ENCODE measurements at regions of chr12 and their contacts with region 1.

Region 1: GRCh38 chr12:49288412-49288853 is 6.5 kb upstream of the PRPH start:
- DNase-seq: peak in 1 of 2 donors; percentile 88
- H3K4me3 ChIP-seq: no peak overlapping the region
- CTCF ChIP-seq: peak in 1 of 3 donors; percentile 64
- POLR2A ChIP-seq: no peak

Region 2: GRCh38 chr12:49160399-49160798 is 128.0 kb before region 1 on chr12:
- intact Hi-C with region 1: no loop called
- DNase-seq: no peak
- H3K4me3 ChIP-seq: no peak overlapping the region
- CTCF ChIP-seq: no peak
- POLR2A ChIP-seq: no peak

Region 3: DNA sequence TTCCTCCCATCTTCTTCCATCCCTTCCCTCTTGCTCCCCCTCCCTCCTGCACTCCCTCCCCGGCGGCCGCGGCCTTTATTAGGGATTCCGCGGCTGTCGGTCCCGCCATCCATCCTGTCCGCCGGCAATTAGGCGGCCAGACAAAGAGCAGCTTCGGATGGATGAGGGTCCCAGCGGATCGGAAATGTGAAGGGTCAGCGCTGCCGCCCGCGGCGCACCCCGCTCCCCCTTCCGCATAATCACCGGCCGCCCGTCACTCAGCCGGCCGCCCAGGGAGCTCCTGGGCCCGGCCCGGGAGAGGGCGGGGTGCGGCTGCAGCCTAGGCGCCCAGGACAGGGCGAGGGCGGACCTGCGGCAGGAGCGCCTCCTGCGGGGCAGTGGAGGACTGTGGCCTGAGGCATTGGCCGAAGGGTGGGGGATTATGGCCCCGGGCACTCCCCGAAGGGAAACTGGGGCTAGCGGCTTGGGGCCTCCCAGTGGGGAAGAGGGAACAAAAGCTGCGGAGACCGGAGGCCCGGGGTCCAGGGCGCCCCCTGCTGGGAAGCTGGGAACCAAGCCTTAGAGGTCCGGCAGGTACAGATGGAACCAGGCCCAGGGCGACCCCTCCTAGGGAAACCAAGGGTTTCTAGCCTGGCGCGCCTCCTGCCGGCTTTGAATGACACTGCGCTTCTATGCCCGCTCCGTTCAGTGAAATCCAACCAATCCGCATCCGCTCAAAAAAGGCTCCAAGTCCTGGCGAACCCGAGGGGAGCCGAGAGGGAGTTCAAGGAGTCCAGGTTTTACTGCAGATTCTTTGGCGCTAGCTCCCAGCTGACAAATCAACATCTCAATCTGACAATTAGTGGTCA is 53.9 kb after region 1 on chr12:
- intact Hi-C with region 1: loop called (anchors 5 kb)
- DNase-seq: peak in 1 of 2 donors; percentile 94
- H3K4me3 ChIP-seq: no peak overlapping the region
- CTCF ChIP-seq: peak in 1 of 3 donors; percentile 65
- POLR2A ChIP-seq: no peak